ENCODE measurements at regions of chr6 and their contacts with region 1.

Region 1: DNA sequence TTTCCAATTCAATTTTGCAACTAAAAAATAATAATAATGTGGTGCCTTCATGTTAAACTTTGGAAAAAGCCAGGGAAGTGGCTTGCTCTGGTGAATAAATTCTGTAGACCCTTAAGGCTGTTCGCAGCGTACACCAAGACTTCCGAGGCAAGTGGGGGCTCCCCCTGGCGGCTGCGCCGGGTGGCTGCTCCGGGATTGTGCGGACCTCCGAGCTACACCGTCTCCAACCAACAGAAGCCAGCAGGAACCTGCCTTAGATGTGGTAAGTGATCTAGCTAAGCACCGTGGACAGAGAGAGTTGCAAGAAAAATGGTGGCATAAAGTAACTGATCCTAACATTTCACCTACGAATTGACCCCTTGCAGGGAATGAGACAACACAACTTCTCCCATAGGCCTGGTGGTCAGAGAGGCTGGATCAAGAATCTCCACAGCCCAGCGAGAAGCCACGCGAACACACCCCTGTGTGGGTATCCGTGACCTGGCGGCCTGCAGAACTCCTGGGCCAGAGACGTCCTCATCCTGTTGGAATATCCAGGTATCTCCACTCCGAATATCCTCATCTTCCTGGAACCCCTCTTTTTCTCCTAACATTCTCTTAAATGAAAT is 69.6 kb downstream of the TBXT start:
- DNase-seq: peak; percentile 73
- H3K4me3 ChIP-seq: peak overlapping the region; percentile 44
- CTCF ChIP-seq: peak; percentile 97

Region 2: DNA sequence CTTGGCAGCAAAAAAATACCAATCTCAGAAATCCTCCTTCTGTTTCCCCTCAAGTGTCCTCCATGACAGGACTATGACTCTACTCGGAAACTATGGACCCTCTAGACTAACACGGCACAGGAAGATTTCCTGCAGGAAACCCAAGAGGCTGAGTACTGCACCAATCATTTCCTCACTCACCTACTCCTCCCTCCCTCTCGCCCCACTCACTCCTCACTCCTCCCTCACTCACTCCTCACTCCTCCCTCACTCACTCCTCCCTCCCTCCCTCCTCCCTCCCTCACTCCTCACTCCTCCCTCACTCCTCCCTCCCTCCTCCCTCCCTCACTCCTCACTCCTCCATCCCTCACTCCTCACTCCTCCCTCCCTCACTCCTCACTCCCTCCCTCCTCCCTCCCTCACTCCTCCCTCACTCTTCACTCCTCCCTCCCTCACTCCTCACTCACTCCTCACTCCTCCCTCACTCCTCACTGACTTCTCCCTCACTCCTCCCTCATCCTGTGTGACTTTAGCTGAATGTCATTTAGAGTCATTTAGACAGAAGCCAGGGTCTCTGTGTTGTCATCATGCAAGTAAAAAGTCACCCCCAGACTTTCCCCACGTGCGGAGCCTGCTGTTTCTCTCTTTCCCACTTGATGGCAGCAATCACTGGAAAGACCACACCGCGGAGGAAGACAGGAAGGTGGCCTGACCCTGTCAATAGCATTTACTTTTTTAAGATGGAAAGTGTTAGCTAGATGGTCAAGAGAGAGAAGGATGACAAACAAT is 208.2 kb before region 1 on chr6:
- in situ Hi-C with region 1: loop called (anchors 5 kb)
- DNase-seq: peak; percentile 39
- H3K4me3 ChIP-seq: no peak overlapping the region
- CTCF ChIP-seq: peak; percentile 89

Region 3: DNA sequence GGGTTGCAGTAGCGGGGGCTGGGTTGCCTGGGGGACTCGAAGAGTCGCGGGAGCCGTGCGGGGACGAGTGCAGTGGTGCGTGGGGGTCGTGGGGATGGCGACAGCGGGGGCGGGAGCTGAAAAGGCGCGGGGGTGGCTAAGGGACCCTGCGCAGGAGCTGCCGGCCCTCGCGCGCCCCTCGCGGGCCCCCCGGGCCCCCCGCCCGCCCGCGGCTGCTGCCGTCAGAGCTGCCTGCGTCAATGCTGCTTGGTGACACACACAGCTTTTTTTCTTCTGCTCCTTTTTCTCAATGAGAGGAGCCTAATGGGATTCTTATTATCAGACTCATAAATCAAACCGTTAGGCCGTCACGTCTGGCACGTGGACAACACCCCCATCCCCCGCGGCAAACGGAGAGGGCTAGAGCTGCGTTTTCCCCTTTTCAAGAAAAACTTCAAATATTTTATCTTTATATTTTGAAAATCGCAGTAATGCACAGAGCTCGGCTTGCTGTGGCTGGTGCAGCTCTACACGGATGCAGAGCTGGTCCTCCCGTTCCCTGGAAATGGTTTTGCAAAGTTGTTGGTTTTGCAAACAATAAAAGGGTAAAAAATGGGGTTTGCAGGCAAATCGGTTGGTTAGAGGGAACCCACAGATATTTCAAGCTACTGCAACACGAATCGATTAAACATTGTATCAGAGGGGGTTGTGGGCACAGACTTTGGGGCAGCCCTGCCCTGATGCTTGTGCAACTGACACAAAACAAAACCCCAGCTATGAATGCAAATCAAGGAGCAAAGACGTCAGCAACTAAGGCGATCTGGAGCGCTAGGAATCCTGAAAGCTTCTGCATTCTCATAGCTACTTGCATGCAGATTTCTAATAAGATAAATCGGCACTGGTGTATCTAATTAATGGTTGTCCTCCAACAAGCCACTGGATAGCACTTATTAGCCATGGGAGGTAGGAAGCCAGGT is 91.8 kb before region 1 on chr6:
- in situ Hi-C with region 1: loop called (anchors 5 kb)
- DNase-seq: peak; percentile 74
- H3K4me3 ChIP-seq: peak overlapping the region; percentile 39
- CTCF ChIP-seq: no peak

Measured in astrocyte of the cerebellum (primary cell).